Activated CD8-positive, alpha-beta T cell treated with anti-CD3 and anti-CD28 coated beads for 36 hours (primary cell): ENCODE measurements at regions of chr5 and their contacts with region 1.

Region 1: DNA sequence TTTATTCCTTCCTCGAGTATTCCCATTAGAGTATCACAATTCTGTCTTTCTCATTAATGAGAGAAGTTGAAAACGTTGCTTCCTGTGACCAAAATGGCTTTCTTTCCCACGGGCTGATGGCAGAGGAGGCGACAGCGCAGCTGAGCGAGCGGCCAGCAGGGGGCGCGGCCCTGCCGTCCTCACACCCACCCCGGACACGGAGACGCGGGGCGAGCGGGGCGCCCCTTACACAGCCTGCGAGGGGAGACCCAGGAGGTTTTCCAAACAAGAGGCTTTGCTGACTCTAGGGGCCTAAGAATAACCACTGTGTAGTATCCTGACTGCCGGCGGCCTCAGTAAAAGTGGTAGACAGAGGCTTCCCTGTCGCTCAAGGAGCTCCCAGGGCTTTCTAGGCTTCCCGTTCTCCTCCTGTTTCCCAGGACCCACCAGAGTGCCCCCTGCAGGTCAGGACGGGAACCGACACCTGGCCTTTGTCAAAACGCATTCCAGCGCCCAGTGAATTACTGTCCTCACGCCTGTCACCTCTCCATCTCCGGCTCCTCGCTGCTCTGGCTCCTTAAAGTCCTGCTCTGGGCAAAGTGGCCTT is 27.3 kb upstream of the FGF1 start:
- DNase-seq: peak; percentile 92
- ATAC-seq: peak; percentile 97
- H3K4me3 Mint-ChIP-seq: peak overlapping the region; percentile 72
- H3K27ac Mint-ChIP-seq: peak overlapping the region; percentile 40
- H3K4me1 Mint-ChIP-seq: peaks cover 5% of the 10 kb centered on the region
- H3K27me3 Mint-ChIP-seq: no peaks in the 10 kb centered on the region
- CTCF ChIP-seq: peak; percentile 93

Region 2: DNA sequence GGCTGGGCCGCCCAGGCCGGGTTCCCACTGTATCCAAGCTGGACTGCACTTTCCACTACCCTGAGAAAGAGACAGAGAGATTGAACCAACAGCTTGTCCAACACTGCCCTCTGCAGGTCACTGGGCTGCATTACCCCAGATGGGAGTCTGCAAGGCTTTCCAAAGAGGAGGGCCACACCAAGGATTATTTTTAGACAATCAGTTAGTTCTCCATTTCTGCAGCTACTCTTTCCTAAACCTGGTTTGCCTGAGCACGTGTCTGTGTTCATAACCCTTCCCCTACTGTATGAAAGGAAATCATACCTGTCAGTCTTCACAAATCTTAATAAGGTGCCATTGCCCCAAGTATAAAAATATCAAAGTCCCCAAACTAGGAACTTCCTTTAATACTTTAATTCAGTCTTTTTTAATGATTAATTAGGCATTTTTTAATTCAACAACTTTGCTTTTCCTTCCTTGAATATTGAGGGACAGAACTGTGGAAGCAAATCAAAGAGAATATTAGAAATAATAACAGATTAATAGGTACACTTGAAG is 14.0 kb before region 1 on chr5:
- CTCF ChIA-PET with region 1: interaction called, 56 read pairs
- POLR2A ChIA-PET with region 1: no interaction called
- intact Hi-C with region 1: no loop called
- DNase-seq: peak; percentile 86
- ATAC-seq: peak; percentile 98
- H3K4me3 Mint-ChIP-seq: no peak overlapping the region
- H3K27ac Mint-ChIP-seq: no peak overlapping the region
- H3K4me1 Mint-ChIP-seq: peaks cover 2% of the 10 kb centered on the region
- H3K27me3 Mint-ChIP-seq: peaks cover under 1% of the 10 kb centered on the region
- CTCF ChIP-seq: peak; percentile 97

Region 3: DNA sequence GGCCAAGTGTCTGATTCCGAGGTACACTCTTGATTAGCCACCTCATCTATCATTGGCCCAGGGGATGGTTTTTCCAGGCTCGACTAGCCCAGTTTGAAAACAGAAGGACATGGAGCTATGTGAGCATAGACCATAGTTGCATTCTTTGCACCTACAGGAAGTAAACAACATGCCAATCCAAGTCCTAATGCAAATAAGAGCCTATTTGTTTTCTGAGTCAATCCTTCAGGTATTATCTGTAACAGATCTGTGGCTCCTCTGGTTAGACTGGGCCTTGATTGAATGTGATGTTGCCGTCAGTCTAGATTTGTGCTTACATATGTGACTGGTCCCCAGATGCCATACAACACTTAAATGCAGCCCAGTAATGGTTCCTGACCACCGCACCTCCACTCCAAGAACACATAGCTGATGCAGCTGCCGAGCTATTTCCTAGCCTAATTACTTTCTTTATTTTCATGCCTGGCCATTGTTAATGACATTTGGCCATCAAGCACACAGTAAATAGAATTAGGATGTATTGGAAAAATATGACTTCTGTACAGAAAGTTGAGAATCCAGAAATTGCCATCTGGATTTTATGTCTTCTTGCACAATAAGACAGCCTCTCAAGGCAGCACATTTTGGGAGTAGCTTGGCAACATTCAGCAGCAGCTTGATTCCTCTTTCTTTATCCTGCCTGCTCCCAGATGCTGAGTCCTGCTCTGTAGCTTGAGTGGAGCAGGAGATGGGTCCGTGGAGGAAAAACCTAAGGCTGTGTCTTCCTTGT is 27.4 kb after region 1 on chr5:
- CTCF ChIA-PET with region 1: interaction called, 125 read pairs
- POLR2A ChIA-PET with region 1: no interaction called
- intact Hi-C with region 1: no loop called
- DNase-seq: no peak
- ATAC-seq: no peak
- H3K4me3 Mint-ChIP-seq: no peak overlapping the region
- H3K27ac Mint-ChIP-seq: no peak overlapping the region
- H3K4me1 Mint-ChIP-seq: no peaks in the 10 kb centered on the region
- H3K27me3 Mint-ChIP-seq: peaks cover 2% of the 10 kb centered on the region
- CTCF ChIP-seq: no peak

Region 4: DNA sequence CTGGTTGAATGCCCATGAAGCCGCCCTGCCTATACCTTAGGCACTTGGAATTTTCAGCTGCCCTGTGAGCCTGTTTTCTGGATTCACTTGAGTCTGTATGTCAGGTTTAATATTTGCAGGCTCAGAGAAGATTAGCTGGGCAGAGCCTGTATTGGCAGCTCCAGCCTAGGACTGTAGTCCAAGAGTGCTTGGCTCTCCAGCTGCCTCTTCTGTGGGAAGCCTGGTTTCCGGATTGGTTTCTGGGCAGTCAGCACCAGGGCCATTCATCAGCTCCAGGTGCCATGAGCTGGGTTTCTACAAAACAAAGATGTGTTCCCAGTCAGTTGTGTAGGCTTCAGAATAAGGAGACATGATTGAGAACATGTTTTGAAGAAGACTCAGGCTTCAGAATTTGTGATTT is 147.1 kb after region 1 on chr5:
- CTCF ChIA-PET with region 1: interaction called, 10 read pairs
- POLR2A ChIA-PET with region 1: no interaction called
- intact Hi-C with region 1: no loop called
- DNase-seq: no peak
- ATAC-seq: no peak
- H3K4me3 Mint-ChIP-seq: no peak overlapping the region
- H3K27ac Mint-ChIP-seq: no peak overlapping the region
- H3K4me1 Mint-ChIP-seq: peaks cover 53% of the 10 kb centered on the region
- H3K27me3 Mint-ChIP-seq: no peaks in the 10 kb centered on the region
- CTCF ChIP-seq: no peak

Region 5: GRCh38 chr5:142888469-142889085 is 175.4 kb after region 1 on chr5:
- CTCF ChIA-PET with region 1: interaction called, 673 read pairs
- POLR2A ChIA-PET with region 1: interaction called, 4 read pairs
- intact Hi-C with region 1: loop called (anchors 2 kb)
- DNase-seq: no peak
- ATAC-seq: no peak
- H3K4me3 Mint-ChIP-seq: no peak overlapping the region
- H3K27ac Mint-ChIP-seq: no peak overlapping the region
- H3K4me1 Mint-ChIP-seq: peaks cover 8% of the 10 kb centered on the region
- H3K27me3 Mint-ChIP-seq: no peaks in the 10 kb centered on the region
- CTCF ChIP-seq: peak; percentile 93

Region 6: DNA sequence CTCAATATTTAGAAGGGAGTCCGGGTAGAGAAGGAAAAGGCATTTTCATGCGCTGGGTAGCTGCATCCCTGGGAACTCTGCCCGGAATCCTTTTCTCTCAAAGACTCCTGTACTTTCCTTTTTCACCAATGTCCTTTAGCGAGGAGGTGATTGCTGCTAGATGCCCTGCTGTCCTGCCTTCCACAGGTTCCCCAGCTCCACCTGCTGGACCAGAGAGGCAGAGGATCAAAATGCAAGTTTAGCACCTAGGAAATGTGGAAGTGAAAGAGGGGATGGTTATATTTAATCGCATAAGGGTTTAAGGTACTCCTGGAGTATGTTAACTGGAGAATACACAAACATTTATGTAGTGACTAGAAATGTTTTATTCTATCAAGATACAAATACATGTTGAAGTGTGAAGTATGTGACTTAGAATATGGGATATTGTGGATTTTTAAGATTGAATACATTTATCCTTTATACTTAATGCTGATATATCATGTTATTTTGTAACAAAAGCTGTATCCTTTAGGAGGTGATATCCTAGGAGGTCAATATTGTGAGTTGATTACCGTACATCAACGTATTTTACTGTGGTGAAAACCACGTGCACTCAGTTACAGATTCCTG is 202.7 kb after region 1 on chr5:
- CTCF ChIA-PET with region 1: interaction called, 13 read pairs
- POLR2A ChIA-PET with region 1: no interaction called
- intact Hi-C with region 1: no loop called
- DNase-seq: peak; percentile 41
- ATAC-seq: no peak
- H3K4me3 Mint-ChIP-seq: no peak overlapping the region
- H3K27ac Mint-ChIP-seq: no peak overlapping the region
- H3K4me1 Mint-ChIP-seq: no peaks in the 10 kb centered on the region
- H3K27me3 Mint-ChIP-seq: no peaks in the 10 kb centered on the region
- CTCF ChIP-seq: no peak